Activated CD4-positive, alpha-beta T cell treated with anti-CD3 and anti-CD28 coated beads for 36 hours (primary cell): ENCODE measurements at regions of chr17 and their contacts with region 1.

Region 1: GRCh38 chr17:5486204-5487124 is at the start of gene MIS12:
- DNase-seq: peak; percentile 99
- ATAC-seq: peak; percentile 94
- H3K4me3 Mint-ChIP-seq: peak within 1 kb of the TSS; percentile 96
- H3K27ac Mint-ChIP-seq: peak within 1 kb of the TSS; percentile 98
- H3K4me1 Mint-ChIP-seq: peaks cover 50% of the 10 kb centered on the region
- H3K27me3 Mint-ChIP-seq: no peaks in the 10 kb centered on the region
- total RNA-seq, gene MIS12: 29.4 to 34.4 TPM

Region 2: DNA sequence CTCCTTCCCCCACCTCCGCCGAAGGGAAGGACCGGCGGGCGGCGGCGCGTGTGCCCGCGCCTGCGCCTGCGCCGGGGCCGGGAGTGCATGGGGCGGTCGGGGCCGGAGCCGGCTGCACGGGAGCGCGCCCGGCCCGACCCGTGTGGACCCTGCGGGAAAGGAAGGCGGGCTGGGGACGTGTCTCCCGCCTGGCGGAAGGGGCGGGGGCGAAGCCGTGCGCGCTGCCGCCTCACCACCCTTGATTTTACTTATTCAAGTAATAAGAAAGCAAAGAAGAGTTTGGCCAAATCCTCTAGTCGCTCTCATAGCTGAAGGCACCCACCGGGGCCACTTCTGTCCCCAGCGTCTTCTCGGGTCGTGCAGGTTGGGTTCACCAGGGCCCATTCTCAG is 537.5 kb before region 1 on chr17:
- CTCF ChIA-PET with region 1: no interaction called
- POLR2A ChIA-PET with region 1: no interaction called
- intact Hi-C with region 1: loop called in 1 of 2 experiments (anchors 1 kb)
- DNase-seq: peak; percentile 88
- ATAC-seq: peak; percentile 39
- H3K4me3 Mint-ChIP-seq: peak overlapping the region; percentile 99
- H3K27ac Mint-ChIP-seq: peak overlapping the region; percentile 100
- H3K4me1 Mint-ChIP-seq: peaks cover 34% of the 10 kb centered on the region
- H3K27me3 Mint-ChIP-seq: no peaks in the 10 kb centered on the region

Region 3: GRCh38 chr17:5281814-5282653 is 204.4 kb before region 1 on chr17 and contains the start of gene RABEP1:
- CTCF ChIA-PET with region 1: no interaction called
- POLR2A ChIA-PET with region 1: no interaction called
- intact Hi-C with region 1: loop called in 1 of 2 experiments (anchors 1 kb)
- DNase-seq: peak; percentile 97
- ATAC-seq: peak; percentile 81
- H3K4me3 Mint-ChIP-seq: peak within 1 kb of the TSS; percentile 86
- H3K27ac Mint-ChIP-seq: peak within 1 kb of the TSS; percentile 90
- H3K4me1 Mint-ChIP-seq: peaks cover 32% of the 10 kb centered on the region
- H3K27me3 Mint-ChIP-seq: no peaks in the 10 kb centered on the region
- total RNA-seq, gene RABEP1: 60.4 to 66.2 TPM

Region 4: GRCh38 chr17:5500589-5501391 is 14.3 kb after region 1 on chr17:
- CTCF ChIA-PET with region 1: interaction called, 5 read pairs
- POLR2A ChIA-PET with region 1: interaction called, 8 read pairs
- intact Hi-C with region 1: loop called (anchors 1 kb)
- DNase-seq: peak; percentile 87
- ATAC-seq: peak; percentile 98
- H3K4me3 Mint-ChIP-seq: peak overlapping the region; percentile 79
- H3K27ac Mint-ChIP-seq: peak overlapping the region; percentile 72
- H3K4me1 Mint-ChIP-seq: peaks cover 3% of the 10 kb centered on the region
- H3K27me3 Mint-ChIP-seq: no peaks in the 10 kb centered on the region

Region 5: DNA sequence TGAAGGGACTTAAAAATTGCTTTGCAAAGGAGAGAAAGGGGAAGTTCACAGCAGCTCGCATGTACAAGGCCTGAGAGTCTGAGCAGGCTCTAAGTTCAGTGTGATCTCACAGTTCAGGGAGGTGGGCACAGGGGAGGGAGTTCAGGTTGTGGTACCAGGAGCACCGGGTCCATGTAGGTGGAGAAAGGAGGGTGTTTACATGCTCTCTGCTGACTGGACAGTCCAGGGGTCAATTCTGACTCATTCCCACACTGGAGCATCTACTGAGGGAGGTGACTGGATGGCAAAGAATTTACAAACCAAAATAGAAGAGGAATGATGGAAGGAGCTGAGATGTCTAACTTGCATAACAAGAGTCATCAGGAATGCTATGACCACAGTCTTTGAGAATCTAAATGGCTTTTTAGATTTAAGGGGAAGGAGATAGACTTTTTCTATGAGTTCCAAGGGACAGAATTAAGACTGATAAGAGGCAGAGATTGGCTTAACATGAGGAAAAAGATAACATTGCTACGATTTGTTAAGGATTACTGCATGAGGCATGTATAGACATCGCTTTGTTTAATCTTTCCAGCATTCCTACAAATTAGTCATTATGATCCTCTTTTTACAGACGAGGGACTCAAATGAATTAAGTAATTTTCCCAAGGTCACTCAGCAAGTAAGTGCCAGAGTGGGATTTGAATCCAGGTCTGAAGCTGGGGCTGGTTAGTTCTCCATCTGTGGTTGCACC is 29.8 kb after region 1 on chr17:
- CTCF ChIA-PET with region 1: no interaction called
- POLR2A ChIA-PET with region 1: no interaction called
- intact Hi-C with region 1: no loop called
- DNase-seq: no peak
- ATAC-seq: no peak
- H3K4me3 Mint-ChIP-seq: no peak overlapping the region
- H3K27ac Mint-ChIP-seq: no peak overlapping the region
- H3K4me1 Mint-ChIP-seq: peaks cover 24% of the 10 kb centered on the region
- H3K27me3 Mint-ChIP-seq: no peaks in the 10 kb centered on the region

Region 6: DNA sequence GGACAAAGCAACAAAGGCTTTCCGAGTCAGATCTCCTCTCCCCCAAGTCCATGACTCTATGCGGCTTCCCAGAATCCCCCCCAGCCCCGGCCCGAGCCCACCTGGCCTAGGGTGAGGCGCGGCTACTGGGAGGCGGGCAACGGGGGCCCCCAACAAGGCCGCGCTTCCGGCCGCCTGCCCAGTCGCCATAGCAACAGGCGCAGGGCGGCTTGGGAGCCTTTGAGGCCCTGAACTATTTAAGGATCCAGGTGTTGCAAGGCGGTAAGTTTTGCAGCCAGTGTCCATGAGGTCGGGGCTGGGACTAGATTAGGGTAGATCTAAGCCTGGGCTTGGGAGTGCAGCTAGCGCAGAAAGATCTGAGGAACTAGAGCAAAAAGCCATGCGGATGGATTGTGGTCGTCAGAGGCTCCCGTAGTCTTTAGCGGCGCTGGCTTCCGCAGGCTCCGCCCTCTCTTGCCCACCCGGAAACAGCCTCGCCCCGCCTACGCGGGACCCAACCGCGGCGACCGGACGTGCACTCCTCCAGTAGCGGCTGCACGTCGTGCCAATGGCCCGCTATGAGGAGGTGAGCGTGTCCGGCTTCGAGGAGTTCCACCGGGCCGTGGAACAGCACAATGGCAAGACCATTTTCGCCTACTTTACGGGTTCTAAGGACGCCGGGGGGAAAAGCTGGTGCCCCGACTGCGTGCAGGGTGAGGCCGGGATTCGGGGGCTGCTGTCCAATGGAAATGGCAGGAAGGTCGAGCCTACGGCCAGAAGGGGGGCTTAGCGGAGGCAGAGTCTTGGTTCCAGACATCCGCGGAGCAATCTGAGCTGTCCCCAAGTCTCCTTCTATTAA is 1154.3 kb after region 1 on chr17 and contains the starts of genes KIAA0753 and TXNDC17:
- CTCF ChIA-PET with region 1: no interaction called
- POLR2A ChIA-PET with region 1: no interaction called
- intact Hi-C with region 1: loop called in 1 of 2 experiments (anchors 1 kb)
- DNase-seq: peak; percentile 96
- ATAC-seq: peak; percentile 81
- H3K4me3 Mint-ChIP-seq: peak within 1 kb of the TSS; percentile 92
- H3K27ac Mint-ChIP-seq: peak within 1 kb of the TSS; percentile 92
- H3K4me1 Mint-ChIP-seq: peaks cover 59% of the 10 kb centered on the region
- H3K27me3 Mint-ChIP-seq: no peaks in the 10 kb centered on the region
- total RNA-seq, gene KIAA0753: 17.1 to 24.9 TPM
- total RNA-seq, gene TXNDC17: 52.4 to 122 TPM